ENCODE measurements at regions of chr12 and their contacts with region 1.

Region 1: DNA sequence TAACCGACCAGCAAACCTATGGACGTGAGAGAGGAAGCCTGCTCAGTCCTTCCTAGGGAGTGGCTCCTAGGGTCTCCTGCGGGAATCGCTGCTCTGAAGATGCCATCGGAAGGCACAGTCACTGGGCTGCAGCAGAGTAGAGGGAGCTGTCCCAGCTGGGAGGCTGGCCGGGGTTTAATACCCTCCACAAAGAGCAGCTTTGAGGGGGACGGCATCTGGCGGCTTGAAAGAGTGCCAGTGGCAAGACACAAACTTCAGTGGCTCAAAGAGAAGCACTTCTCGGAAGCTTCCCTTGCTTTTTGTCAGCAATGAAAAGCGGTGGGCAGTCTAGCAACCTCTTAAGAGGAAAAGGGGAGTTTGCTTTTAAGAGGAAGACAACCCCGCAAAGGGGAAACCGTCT is 114.6 kb downstream of the TMEM132C start:
- DNase-seq: peak; percentile 25 to 84 (median 78)
- H3K4me3 ChIP-seq: peak overlapping the region in 58 of 59 donors; percentile 9 to 71 (median 45)
- H3K27ac ChIP-seq: peak overlapping the region in 49 of 59 donors; percentile 8 to 88 (median 75)
- H3K27me3 ChIP-seq: peaks cover 0 to 13% (median 0%) of the 10 kb centered on the region in 45 donors
- CTCF ChIP-seq: peak in 20 of 56 donors; percentile 6 to 44 (median 18)

Region 2: DNA sequence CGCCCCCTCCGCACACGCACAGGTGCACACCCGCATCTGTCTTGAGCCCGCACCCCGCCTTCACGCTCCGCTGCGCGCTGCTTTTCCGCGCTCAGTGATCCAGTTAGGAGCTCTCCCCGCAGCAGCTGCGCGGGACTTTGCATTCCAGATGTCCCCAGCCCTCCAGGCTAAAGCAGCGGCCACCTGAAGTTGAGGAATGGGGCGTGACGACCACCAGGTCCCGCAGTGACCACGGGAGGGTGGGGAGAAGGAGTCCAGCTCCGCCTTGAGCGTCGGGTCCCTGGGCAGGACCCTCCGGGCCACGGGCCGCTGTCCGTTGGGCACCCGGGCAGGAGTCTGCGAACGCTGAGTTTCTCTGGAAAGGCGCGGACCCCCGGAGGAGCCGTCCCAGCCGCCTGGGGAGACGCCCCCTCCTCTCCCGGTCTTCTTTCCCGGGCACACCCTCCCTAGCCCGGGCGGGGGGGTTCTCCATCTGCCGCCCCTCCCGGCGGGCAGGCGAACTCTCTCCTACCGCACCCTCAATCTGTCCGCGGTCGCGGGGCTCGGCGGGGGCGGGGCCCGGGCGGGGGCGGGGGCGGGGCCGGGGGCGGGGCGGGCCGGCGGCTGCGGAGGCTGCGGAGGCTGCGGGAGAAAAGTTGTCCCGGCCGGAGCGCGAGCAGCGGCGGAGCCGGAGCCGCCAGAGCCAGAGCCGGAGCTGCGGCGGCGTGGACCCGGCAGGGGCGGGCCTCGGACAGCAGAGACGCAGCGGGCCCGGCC is 114.8 kb before region 1 on chr12 and contains the start of gene TMEM132C:
- intact Hi-C with region 1: loop called in 1 of 2 experiments (anchors 2 kb)
- DNase-seq: peak in 1 of 10 donors; percentile 23
- H3K4me3 ChIP-seq: peak within 1 kb of the TSS; percentile 49 to 80 (median 65)
- H3K27ac ChIP-seq: peak within 1 kb of the TSS in 35 of 59 donors; percentile 5 to 75 (median 52)
- H3K27me3 ChIP-seq: peaks cover 0 to 18% (median 3%) of the 10 kb centered on the region in 45 donors
- CTCF ChIP-seq: no peak
- total RNA-seq, gene TMEM132C: 9.2 to 19.8 (median 13.9) TPM

Region 3: DNA sequence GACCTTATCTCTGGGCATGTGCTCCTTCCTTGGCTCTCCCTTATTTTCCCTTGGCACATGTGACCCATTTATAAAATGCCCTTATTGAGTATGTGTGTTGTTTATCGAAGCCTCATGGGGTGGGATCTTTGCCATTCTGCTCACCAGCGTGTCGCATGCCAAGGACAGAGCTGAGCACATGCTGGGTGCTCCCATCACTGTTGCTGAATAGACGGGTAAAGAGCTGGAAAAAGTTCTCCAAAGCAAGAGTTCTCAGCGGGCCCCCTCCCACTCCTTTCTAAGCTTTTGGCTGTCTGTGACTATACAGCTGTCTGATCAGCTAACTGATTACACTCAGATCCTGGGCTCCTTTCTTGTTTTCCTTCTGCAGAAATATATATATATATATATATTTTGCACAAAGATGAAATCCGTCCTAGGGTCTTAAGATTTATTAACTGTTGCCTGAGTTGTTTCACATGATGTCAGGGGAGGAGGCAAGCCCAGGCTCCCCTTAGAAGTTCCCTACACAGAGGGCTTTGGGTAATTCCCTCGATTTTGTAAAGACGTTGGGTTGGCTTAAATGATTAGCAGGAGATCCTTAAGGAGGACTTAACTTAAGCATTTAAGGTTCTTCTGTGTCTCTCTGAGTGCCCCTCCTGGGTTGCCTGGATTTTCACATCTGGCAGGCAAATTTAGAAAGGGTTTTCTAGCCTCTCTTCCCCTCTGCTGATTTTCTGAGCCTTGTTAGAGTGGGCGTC is 43.0 kb before region 1 on chr12:
- intact Hi-C with region 1: no loop called
- DNase-seq: no peak
- H3K4me3 ChIP-seq: peak overlapping the region in 14 of 59 donors; percentile 3 to 33 (median 18)
- H3K27ac ChIP-seq: peak overlapping the region in 6 of 59 donors; percentile 1 to 54 (median 21)
- H3K27me3 ChIP-seq: peaks cover 0 to 20% (median 0%) of the 10 kb centered on the region in 45 donors
- CTCF ChIP-seq: no peak

Region 4: DNA sequence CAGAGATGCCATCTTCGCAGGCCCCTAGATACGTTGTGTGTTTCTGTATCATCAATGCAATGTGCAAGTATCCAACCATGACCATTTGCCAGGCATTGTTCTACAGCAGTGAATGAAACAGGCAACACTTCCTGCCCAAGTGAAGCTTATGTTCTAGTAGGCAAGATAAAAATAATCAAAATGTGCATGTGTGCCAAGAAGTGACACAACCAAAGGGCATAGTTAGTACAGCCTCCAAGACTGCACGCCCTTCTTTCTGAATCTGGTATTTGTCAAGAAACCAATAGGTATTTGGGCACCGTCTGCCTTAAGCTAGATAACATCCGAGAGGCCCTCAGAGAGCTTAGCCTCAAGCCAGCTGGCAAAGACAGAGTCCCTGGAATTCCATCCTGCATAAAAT is 37.4 kb after region 1 on chr12:
- intact Hi-C with region 1: no loop called
- DNase-seq: no peak
- H3K4me3 ChIP-seq: no peak overlapping the region
- H3K27ac ChIP-seq: no peak overlapping the region
- H3K27me3 ChIP-seq: peaks cover 0 to 2% (median 0%) of the 10 kb centered on the region in 45 donors
- CTCF ChIP-seq: no peak